Activated CD8-positive, alpha-beta T cell treated with anti-CD3 and anti-CD28 coated beads, Interleukin-2, amount 10 ng/mL, durations not matched to agents 7 days and 5 days (primary cell): ENCODE measurements at regions of chr3 and their contacts with region 1.

Region 1: GRCh38 chr3:185764163-185764979 is 60.5 kb downstream of the IGF2BP2 start:
- DNase-seq: no peak
- ATAC-seq: no peak
- H3K4me3 Mint-ChIP-seq: no peak overlapping the region
- H3K27ac Mint-ChIP-seq: no peak overlapping the region
- H3K4me1 Mint-ChIP-seq: peaks cover 3% of the 10 kb centered on the region
- H3K27me3 Mint-ChIP-seq: peaks cover 46% of the 10 kb centered on the region

Region 2: GRCh38 chr3:185659942-185660921 is 104.1 kb before region 1 on chr3:
- CTCF ChIA-PET with region 1: interaction called, 59 read pairs
- POLR2A ChIA-PET with region 1: no interaction called
- DNase-seq: peak; percentile 78
- ATAC-seq: peak; percentile 89
- H3K4me3 Mint-ChIP-seq: no peak overlapping the region
- H3K27ac Mint-ChIP-seq: no peak overlapping the region
- H3K4me1 Mint-ChIP-seq: peaks cover 4% of the 10 kb centered on the region
- H3K27me3 Mint-ChIP-seq: peaks cover 17% of the 10 kb centered on the region

Region 3: DNA sequence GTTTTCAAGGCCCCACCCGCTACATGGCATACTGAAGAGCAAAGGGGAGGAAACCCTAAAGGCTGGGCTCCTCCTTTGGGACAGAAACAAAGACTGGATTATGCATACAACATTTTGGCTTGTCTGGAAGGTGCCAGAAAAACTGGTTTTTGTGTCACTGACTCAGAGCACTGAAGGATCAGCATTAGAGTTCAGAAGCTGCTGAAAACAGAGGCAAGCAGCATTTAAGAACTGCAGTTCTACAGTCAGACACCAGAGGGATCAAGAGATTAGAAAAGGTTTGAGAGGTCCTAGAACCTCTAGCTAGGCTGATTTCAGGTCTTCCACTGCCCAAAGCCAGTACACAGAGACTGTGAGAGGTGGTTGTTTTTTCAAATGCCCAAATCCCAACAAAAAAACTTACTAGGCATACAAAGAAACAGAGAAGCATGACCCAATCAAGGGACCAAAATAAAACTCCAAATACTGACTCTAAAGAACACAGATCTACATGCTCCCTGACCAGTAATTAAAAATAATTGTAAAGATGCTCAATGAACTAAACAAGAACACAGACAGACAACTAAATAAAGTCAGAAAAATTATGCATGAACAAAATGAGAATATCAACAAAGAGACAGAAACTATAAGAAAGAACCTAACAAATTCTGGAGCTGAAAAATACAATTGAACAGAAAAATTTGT is 87.1 kb before region 1 on chr3:
- CTCF ChIA-PET with region 1: interaction called, 38 read pairs
- POLR2A ChIA-PET with region 1: no interaction called
- DNase-seq: peak; percentile 29
- ATAC-seq: no peak
- H3K4me3 Mint-ChIP-seq: no peak overlapping the region
- H3K27ac Mint-ChIP-seq: no peak overlapping the region
- H3K4me1 Mint-ChIP-seq: no peaks in the 10 kb centered on the region
- H3K27me3 Mint-ChIP-seq: peaks cover 37% of the 10 kb centered on the region

Region 4: GRCh38 chr3:185733980-185734724 is 30.2 kb before region 1 on chr3:
- CTCF ChIA-PET with region 1: interaction called, 23 read pairs
- POLR2A ChIA-PET with region 1: no interaction called
- DNase-seq: no peak
- ATAC-seq: no peak
- H3K4me3 Mint-ChIP-seq: no peak overlapping the region
- H3K27ac Mint-ChIP-seq: no peak overlapping the region
- H3K4me1 Mint-ChIP-seq: no peaks in the 10 kb centered on the region
- H3K27me3 Mint-ChIP-seq: peaks cover 9% of the 10 kb centered on the region

Region 5: DNA sequence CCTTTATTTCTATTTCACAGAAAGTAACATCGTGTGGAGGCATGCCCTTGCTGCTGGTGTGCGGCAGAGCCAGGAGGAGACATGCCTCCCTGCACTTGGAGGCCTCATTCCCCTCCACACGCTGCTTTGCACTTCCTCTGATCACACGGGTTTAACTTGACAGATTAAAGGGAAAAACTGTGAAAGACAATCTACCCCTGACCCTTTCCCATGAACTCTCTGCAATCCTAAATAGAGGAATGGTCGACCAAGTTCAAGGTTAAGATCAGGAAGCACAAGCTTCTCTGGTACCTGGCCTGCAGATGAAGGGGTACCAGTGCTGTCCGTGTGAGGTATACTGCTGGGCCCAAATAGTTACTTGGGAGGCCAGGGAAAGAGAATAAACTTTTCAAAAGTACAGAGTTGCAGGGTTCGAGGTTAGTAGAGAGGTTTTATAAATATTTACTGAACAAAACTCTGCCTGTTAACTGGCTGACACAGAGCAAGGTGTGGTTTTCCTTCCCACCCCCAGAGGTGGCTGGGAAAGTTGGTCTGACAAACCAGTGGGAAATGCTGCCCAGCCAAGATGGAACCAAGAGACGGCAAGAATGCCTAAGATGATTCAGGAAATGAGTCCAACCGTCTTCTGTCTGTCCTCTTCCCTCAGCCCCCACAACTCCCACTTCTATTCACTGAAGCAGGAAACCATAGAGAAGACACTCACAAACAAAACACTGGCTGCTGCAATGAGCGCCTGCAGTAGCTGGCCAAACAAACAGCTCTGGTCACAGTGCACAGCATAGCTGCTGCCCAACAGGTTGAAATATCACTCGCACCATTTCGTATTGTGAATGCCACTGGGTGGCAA is 19.2 kb before region 1 on chr3:
- CTCF ChIA-PET with region 1: interaction called, 29 read pairs
- POLR2A ChIA-PET with region 1: no interaction called
- DNase-seq: no peak
- ATAC-seq: no peak
- H3K4me3 Mint-ChIP-seq: no peak overlapping the region
- H3K27ac Mint-ChIP-seq: no peak overlapping the region
- H3K4me1 Mint-ChIP-seq: peaks cover 3% of the 10 kb centered on the region
- H3K27me3 Mint-ChIP-seq: peaks cover 5% of the 10 kb centered on the region

Region 6: GRCh38 chr3:185781759-185782158 is 17.4 kb after region 1 on chr3:
- CTCF ChIA-PET with region 1: interaction called, 58 read pairs
- POLR2A ChIA-PET with region 1: no interaction called
- DNase-seq: no peak
- ATAC-seq: no peak
- H3K4me3 Mint-ChIP-seq: no peak overlapping the region
- H3K27ac Mint-ChIP-seq: no peak overlapping the region
- H3K4me1 Mint-ChIP-seq: no peaks in the 10 kb centered on the region
- H3K27me3 Mint-ChIP-seq: peaks cover 12% of the 10 kb centered on the region